ENCODE measurements at regions of chr7 and their contacts with region 1.

Region 1: GRCh38 chr7:87312215-87312865 is 33.1 kb upstream of the CROT start:
- DNase-seq: peak; percentile 74

Region 2: DNA sequence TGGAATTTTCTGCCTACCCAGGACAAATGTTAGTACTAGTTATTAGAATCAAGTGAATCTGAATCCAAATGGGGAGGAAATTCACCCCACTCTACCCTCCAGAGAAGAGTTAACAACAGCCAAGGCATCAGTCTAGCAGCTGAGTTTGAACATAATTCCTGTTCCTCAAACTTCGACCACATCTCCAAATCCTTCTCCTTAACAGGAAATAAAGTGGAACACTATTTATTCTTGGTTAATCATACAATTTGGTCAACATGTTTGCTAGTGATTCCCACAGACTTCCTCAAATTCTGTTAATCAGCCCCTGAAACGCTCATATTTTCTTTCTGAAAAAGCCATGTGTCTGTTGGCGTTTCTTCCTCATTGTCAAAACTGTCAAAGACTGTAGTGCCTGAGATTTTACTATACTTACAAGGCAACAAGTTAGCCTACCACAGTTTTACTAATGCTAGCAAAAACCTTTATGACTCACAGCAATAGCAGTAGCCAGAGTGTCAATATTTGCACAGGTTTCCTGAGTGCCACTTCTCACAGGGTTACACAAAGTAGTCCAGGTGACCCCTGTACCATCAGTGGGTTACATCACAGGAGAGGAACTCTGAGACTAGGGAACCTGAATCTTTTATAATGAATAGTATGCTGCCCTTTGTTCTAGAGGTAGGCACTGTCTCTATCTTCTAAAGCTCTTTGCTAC is 465.7 kb before region 1 on chr7:
- in situ Hi-C with region 1: no loop called
- DNase-seq: no peak

Region 3: DNA sequence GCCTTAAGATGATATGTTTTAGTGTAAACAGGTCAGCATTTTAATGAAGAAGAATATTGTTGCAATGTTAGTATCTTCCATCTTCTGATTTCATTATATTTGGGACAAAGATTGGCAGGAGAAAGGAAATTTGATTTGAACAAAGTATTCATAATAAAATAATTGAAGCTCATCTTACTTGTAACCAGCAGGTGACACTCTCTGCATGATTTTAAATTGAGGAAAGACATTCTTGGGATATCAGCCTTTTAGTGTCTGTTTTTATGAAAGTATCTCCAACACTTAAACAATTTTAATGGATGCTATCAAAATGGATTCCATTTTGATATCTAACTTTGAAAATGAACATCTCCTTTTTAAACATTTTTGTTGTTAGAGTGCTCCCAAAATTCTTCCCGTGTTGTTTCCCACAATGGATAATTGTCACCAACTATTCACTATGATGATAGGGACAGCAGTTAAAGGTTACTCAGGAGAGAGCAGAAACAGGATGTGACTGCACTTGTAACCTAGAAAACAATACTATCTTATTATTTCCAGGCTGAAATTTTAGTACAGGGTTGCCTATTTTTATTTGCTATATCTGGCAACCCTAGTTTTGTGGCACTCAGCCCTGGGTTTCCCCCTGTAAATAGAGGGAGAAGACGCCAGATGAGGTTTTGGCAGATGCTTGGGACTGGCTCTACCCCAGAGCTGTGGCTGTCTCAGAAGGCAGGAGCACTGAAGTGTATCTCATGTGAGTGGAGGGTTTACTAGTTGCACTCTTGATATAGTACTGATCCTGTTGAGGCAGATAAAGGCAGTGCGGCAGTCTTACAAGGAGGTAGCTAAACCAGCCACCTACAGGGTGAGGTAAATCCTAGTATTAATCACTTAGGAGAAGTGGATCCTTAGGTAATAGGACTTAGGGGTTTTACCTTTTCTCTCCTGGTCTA is 194.2 kb after region 1 on chr7:
- in situ Hi-C with region 1: loop called (anchors 25 kb)
- DNase-seq: peak; percentile 11